GM10248 (cell line): ENCODE measurements at regions of chr19 and their contacts with region 1.

Region 1: DNA sequence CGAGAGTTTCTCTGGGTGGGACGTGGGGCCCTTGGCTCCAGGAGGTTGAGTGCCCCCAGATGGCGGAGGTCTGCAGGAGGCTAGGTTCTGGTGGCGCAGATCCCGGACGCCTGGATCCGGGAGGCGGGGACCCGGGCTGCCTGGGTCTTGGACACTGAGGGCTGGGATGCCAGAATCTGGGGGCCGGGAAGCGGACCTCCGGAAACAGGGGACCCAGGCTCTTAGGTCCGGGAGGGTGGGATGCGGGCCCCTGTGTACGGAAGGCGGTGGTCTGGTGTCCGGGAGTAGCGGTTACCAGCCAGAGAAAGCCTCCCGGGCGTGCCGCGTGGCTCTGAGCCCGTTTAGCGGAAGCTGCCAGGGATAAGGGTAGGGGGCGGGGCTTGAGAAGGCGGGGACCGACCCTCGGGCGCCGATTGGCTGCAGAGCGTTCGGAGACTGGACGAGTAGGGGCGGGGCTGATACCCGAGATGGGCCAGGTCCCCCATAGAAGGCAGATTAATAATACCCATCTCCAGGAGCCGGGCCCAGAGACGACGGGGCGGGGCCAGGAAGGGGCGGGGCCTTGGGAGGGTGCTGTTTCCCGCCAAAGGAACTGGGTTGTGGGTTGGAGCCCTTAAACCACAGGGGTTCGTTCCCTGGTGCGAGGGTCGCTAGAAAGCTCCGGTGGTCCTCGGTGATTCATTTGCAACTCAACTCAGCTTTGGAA is at the start of gene SLC1A5:
- DNase-seq: peak; percentile 99
- CTCF ChIP-seq: no peak

Region 2: DNA sequence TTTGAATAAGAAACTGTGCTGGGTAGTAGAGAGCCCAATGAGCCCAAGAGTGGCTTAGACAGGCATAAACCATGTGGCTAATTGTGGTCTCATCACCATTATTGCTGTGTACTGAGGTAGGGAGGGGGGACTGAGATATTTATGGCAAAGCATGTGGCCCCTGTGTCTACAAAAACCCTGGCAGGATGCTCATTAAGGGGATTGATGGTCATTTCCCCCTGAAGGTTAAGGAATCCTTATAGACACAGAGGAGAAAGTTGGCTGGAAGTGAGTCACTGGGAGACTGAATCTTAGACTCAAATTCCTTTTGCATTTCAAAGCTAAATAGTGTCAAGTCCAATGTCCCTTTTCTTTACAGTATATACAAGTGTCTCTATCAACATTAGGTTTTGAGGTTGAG is 117.6 kb before region 1 on chr19:
- CTCF ChIA-PET with region 1: no interaction called
- POLR2A ChIA-PET with region 1: interaction called, 13 read pairs
- DNase-seq: no peak
- CTCF ChIP-seq: no peak

Region 3: GRCh38 chr19:46753420-46754155 is 34.8 kb before region 1 on chr19:
- CTCF ChIA-PET with region 1: interaction called, 12 read pairs
- POLR2A ChIA-PET with region 1: interaction called, 7 read pairs
- DNase-seq: peak; percentile 78
- CTCF ChIP-seq: peak; percentile 77

Region 4: DNA sequence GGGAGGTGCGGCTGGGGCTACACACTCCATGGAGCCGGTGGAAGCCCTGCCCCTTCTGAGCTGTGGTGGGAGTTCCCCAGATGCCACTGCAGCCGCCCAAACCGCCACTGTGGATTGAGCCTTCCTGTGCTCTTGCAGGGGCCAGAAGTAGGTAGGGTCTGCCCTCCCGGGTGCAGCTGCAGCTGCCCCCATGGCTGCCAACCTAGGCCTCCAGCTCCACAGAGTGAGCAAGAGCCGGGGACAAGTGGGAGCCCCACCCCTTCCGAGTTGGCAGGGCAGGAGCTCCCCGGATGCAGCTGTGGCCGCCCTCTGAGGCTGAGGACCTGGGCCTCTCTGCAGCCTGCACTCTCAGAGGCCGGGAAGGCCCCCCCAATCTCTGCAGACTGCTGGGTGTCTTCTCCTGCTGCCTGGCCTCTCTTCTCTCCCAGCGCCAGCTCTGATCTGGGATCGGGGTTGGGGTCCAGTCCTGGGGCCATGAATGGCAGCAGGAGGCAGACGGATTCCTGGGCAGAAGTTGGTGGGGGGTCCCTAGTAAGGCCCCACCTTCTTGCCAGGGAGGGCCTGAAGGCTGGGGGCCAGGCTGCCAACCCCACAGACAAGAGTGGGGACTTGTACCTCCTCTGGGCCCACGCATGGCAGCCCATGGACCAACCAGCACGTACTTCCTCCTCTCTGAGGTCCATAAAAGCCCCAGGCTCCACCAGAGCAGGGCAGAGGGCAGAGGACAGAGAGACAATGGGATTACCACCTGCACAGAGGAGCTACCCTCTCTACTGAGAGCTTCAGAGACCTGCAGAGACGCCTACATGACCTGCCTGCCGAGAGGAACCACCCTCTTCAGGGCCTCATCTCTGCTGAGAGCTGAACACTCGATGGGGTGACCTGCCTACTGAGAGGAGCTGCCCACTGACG is 33.3 kb after region 1 on chr19:
- CTCF ChIA-PET with region 1: interaction called, 6 read pairs
- POLR2A ChIA-PET with region 1: interaction called, 22 read pairs
- DNase-seq: peak; percentile 52
- CTCF ChIP-seq: no peak